Ovary (tissue), 10 donors: ENCODE measurements at regions of chr20 and their contacts with region 1.

Region 1: GRCh38 chr20:53034899-53035298 is 62.7 kb downstream of the TSHZ2 start:
- DNase-seq: no peak
- H3K4me3 ChIP-seq: no peak overlapping the region
- H3K27ac ChIP-seq: no peak overlapping the region
- H3K4me1 ChIP-seq: peaks cover 2% of the 10 kb centered on the region
- H3K27me3 ChIP-seq: no peaks in the 10 kb centered on the region
- CTCF ChIP-seq: no peak
- EP300 ChIP-seq: no peak
- POLR2A ChIP-seq: no peak

Region 2: DNA sequence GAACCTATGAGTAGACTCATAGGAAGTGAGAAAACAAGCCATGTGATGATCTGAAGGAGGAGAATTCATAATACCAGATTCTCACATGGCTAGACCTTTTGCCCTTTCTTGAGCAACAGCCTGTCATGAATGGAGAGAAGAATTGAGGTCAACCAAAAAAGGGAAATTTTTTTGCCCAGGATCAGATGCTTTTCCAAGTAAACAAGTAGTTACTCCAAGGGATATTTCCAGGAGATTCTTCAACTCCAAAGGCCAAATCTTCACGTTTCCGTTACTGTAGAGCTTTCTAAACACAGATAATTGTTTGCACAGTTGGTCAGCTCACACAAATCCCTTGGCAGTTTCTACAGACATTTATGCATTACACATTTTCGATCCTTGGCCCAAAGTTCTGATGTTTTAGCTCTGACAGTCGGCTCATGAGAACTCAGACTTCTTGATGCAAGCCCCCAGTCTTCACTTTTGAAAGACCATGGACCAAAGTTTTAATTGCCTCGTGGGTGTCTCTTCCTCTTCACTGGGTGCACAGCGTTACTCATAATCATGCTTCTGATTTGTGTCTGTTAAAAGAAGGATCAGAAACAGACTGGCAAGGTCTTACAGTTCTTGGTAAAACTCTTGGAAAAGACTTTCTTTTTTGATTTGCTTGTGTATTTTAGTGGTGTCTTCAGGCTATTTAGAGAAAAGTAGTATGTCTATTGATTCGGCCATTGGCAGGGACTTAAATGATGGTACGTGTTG is 52.3 kb after region 1 on chr20:
- intact Hi-C with region 1: loop called in 1 of 4 experiments (anchors 5 kb)
- DNase-seq: no peak
- H3K4me3 ChIP-seq: no peak overlapping the region
- H3K27ac ChIP-seq: no peak overlapping the region
- H3K4me1 ChIP-seq: peaks cover 4% of the 10 kb centered on the region
- H3K27me3 ChIP-seq: no peaks in the 10 kb centered on the region
- CTCF ChIP-seq: no peak
- EP300 ChIP-seq: no peak
- POLR2A ChIP-seq: no peak

Region 3: GRCh38 chr20:53245574-53245973 is 210.7 kb after region 1 on chr20:
- intact Hi-C with region 1: no loop called
- DNase-seq: no peak
- H3K4me3 ChIP-seq: no peak overlapping the region
- H3K27ac ChIP-seq: no peak overlapping the region
- H3K4me1 ChIP-seq: peaks cover 4% of the 10 kb centered on the region
- H3K27me3 ChIP-seq: no peaks in the 10 kb centered on the region
- CTCF ChIP-seq: no peak
- EP300 ChIP-seq: no peak
- POLR2A ChIP-seq: no peak